Activated CD4-positive, alpha-beta T cell treated with anti-CD3 and anti-CD28 coated beads for 36 hours (primary cell): ENCODE measurements at regions of chr6 and their contacts with region 1.

Region 1: GRCh38 chr6:6856538-6857523 is 250.9 kb upstream of the RREB1 start:
- DNase-seq: peak; percentile 84
- ATAC-seq: peak; percentile 94
- H3K4me3 Mint-ChIP-seq: peak overlapping the region; percentile 56
- H3K27ac Mint-ChIP-seq: peak overlapping the region; percentile 92
- H3K4me1 Mint-ChIP-seq: peaks cover 33% of the 10 kb centered on the region
- H3K27me3 Mint-ChIP-seq: peaks cover 2% of the 10 kb centered on the region

Region 2: DNA sequence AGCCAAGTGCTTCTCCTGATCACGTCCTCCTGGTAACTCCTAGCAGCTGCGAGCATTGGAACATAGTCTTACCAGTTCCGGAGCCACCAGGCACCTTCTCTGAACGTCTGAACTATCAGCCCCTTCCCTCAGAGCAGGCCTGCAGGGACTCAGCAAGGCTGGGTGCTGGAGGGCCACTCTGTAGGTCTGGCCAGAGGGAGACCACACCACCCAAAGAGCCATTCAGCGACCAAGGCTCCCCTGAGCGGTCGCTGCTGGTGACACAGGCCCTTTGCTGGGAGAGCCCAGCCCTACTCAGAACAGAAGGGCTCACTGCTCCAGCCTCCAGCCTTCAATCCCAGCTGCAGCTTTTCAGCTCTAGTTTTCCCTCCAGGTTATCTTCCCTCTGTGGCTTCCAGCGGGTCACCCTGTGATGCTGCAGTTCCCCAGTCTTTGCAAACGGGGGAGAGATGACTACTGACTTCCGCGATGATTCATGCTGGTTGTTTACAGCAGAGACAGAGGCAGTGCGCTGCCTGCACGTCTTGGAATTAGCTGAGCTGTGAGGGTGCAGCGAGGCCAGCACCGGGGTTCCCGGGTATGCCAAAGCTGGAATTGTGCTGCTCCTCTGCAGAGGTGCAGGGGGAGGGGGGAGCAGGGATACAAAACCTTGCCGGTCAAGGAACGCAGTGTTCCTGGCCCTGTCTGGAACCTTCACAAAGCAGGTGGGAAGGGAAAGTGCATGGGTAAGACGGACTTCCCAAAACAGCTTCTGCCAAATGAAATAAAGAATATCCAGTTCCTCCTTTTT is 106.9 kb before region 1 on chr6:
- CTCF ChIA-PET with region 1: no interaction called
- POLR2A ChIA-PET with region 1: no interaction called
- intact Hi-C with region 1: loop called in 1 of 2 experiments (anchors 5 kb)
- DNase-seq: peak; percentile 79
- ATAC-seq: peak; percentile 96
- H3K4me3 Mint-ChIP-seq: peak overlapping the region; percentile 2
- H3K27ac Mint-ChIP-seq: peak overlapping the region; percentile 72
- H3K4me1 Mint-ChIP-seq: peaks cover 23% of the 10 kb centered on the region
- H3K27me3 Mint-ChIP-seq: peaks cover 5% of the 10 kb centered on the region

Region 3: DNA sequence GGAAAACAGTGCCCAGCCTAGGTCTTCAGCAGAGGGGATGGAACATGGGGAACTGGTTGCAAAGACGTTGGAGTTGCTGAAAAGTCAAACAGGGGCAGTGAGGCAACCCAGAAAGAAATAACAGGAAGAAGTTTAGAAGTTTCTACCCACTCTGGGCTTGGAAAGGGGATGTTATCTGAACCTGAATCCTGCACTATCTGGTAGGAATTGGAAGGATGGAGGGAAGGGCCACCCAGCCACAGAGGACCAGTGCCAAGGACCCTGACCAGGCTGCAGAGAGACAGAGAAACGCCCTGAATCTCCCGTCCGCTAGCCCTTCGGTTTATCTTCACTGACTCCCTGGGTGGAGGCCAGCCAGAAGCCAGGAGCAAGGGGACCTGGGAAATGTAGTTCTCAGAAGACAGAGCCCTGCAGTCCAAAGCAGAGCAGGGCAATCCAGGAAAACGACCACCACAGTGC is 33.6 kb after region 1 on chr6:
- CTCF ChIA-PET with region 1: no interaction called
- POLR2A ChIA-PET with region 1: no interaction called
- intact Hi-C with region 1: no loop called
- DNase-seq: no peak
- ATAC-seq: no peak
- H3K4me3 Mint-ChIP-seq: no peak overlapping the region
- H3K27ac Mint-ChIP-seq: no peak overlapping the region
- H3K4me1 Mint-ChIP-seq: peaks cover 2% of the 10 kb centered on the region
- H3K27me3 Mint-ChIP-seq: no peaks in the 10 kb centered on the region